Right ventricle myocardium inferior (tissue), 1 donor: ENCODE measurements at regions of chr12 and their contacts with region 1.

Region 1: GRCh38 chr12:22083167-22083566 is 37.1 kb downstream of the CMAS start:
- DNase-seq: no peak
- ATAC-seq: no peak

Region 2: GRCh38 chr12:22334410-22335290 is 251.5 kb after region 1 on chr12 and contains the start of gene ST8SIA1:
- intact Hi-C with region 1: loop called (anchors 5 kb)
- DNase-seq: peak; percentile 78
- ATAC-seq: peak; percentile 67
- total RNA-seq, gene ST8SIA1: 3.6 TPM

Region 3: DNA sequence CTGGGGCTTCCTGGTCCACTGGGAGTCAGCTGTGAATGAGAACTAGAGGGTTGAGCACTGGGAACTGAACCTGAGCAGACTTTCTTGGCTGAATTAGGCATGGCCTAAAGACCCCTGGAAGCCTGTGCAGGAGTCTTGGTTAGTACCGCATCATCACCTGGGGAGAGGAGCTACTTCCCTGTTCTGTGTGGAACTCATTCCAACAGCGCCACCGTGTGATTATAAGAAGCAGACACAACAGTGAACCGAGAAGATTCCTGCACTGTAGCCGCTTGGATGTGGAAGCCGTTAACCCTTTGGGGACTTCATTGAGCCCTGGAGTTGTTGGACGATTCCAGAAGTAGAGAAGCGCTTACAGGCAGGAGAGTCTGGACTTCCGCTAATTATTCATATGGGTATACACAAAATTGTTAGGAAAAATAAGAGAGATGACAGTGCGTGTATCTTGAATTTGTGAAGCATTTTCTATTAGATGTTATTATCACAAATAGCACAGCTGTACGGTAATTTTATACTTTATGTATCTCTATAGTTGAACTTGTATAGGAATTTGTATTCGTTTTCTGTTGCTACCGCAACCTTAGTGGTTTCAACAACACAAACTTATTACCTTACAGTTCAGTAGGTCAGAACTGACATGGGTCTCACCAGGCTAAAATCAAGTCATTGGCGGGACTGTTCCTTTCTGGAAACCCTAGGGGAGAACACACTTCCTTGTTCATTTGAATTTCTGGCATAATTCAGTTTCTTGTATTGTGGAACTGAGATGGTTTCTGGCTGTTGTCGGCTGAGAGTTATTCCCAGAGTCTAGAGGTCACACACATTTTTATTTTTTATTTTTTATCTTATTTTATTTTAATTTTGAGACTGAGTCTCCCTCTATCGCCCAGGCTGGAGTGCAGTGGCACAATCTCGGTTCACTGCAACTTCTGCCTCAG is 360.5 kb after region 1 on chr12:
- intact Hi-C with region 1: loop called (anchors 1 kb)
- DNase-seq: peak; percentile 62
- ATAC-seq: peak; percentile 94

Region 4: DNA sequence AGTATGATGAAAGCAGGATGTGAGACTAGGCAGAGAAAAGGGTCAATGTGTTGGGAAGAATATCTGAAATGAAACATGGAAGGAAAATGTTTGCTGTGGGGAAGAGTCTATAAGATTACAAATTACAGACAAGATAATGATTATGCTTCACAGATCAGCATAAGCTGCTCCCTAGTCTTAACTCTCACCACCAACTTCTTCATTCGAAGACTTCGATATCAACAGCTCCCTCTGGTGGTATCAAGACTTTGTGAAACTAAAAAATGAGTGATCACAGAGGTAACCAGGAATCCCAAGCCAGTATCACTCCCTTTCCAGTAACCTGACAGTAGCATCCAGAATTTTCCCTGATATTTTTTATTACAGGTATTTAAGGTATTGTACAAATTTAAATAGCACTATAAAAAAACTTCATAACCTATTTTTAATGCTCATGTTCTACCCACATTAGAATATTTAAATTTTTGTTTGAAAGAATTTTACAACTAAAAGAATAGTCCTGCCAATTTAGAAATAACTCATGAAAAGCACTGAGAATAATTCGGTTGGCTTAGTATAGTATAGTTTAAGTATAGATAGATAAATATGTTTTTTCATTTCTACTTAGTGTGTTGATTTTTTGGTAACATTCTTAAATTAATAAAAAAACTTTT is 376.8 kb after region 1 on chr12:
- intact Hi-C with region 1: loop called (anchors 2 kb)
- DNase-seq: no peak
- ATAC-seq: peak; percentile 37